ENCODE measurements at regions of chr18 and their contacts with region 1.

Region 1: DNA sequence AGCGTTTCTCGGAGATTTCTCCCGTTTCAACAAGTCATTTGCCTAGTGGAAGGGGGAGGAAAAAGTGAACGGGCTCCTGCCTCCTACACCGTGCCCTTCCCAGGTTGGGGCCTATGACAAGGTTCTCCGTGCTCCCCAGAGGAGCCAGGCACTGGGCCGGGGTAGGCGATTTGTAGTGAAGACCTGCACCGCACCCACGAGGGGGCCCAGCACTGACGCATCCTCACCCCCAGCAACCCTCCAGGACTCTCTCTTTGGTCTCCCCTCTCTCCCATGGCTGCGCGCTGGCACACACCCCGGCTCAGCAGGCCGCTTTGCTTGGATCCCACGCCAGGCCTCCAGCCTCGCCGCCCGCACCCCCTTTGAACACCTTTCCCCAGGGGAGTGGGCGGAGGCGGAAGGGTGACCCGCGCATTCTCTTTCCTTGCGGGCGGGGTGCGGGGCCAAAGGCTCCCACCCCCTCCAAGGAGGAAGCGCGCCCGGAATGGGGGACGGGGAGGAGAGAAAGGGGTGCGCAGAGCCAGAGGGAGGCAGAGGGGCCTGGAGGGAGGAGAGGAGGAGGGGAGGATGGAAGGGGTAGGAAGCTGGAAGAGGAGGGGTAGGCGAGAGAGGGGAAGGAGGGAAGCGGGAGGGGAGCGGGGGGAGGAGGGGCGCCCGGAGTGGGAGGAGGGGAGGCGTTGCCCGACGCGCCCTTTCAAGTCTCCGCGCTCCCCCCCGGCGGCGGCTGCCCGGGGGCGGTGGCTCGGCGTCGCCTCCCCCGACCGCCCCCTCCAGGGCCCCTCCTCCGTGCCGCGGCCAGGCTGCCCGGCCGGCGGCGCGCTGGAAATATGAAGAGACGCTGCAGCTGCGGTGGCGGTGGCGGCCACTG is at the start of gene APCDD1:
- DNase-seq: peak; percentile 82
- ATAC-seq: peak; percentile 88
- total RNA-seq, gene APCDD1: 34.5 TPM

Region 2: GRCh38 chr18:10270151-10270571 is 183.9 kb before region 1 on chr18:
- intact Hi-C with region 1: loop called (anchors 10 kb)
- DNase-seq: no peak
- ATAC-seq: peak; percentile 79

Region 3: GRCh38 chr18:10329101-10329500 is 124.9 kb before region 1 on chr18:
- intact Hi-C with region 1: no loop called
- DNase-seq: no peak
- ATAC-seq: no peak

Region 4: GRCh38 chr18:10499230-10499629 is 45.2 kb after region 1 on chr18:
- intact Hi-C with region 1: no loop called
- DNase-seq: no peak
- ATAC-seq: no peak